ENCODE measurements at regions of chr14 and their contacts with region 1.

Region 1: DNA sequence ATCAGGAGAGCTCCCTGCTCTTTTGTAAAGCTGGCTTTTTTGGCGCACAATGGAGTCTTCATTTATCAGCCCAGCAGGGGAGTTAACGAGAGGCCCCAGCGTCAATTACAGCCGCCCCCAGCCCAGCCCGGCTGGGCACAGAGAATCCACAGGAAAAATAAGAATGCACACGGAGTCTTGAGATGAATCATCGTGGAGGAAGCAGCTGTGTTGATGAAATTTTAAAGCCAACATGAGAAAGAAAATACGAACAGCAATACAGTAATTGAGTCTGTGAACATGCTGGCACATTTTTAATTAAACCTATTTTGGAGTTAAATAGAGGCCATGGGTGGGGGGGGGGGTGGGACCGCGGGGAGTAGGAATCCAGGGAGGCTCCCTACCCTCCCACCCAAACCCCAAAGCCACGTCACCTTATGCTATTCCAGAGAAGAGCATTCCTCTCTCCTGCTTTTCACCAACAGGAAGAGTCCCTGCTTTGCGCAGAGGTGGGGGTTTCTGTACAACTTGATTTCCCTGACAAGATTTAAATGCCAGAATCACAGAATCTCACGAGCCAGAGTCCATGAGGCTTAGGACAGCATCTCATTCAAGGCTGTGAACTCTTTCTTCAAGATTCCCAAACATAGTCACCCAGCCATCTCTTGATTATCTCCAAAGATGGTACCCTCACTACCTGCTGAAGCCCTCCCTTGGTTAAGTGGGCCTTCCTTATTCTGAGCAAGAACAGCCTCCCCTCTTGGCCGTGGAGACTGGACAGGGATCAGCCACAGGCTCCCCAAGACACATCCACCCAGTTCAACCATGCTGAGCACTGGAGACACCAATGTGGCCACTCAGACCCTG is 50.3 kb downstream of the CCNK start:
- DNase-seq: no peak
- H3K4me3 ChIP-seq: no peak overlapping the region
- H3K27ac ChIP-seq: no peak overlapping the region
- H3K4me1 ChIP-seq: no peaks in the 10 kb centered on the region
- H3K27me3 ChIP-seq: no peaks in the 10 kb centered on the region
- CTCF ChIP-seq: no peak
- POLR2A ChIP-seq: no peak

Region 2: GRCh38 chr14:99541677-99542470 is 10.4 kb after region 1 on chr14:
- intact Hi-C with region 1: loop called (anchors 1 kb)
- DNase-seq: no peak
- H3K4me3 ChIP-seq: no peak overlapping the region
- H3K27ac ChIP-seq: no peak overlapping the region
- H3K4me1 ChIP-seq: peaks cover 4 to 11% of the 10 kb centered on the region in 2 donors
- H3K27me3 ChIP-seq: no peaks in the 10 kb centered on the region
- CTCF ChIP-seq: no peak
- POLR2A ChIP-seq: no peak

Region 3: DNA sequence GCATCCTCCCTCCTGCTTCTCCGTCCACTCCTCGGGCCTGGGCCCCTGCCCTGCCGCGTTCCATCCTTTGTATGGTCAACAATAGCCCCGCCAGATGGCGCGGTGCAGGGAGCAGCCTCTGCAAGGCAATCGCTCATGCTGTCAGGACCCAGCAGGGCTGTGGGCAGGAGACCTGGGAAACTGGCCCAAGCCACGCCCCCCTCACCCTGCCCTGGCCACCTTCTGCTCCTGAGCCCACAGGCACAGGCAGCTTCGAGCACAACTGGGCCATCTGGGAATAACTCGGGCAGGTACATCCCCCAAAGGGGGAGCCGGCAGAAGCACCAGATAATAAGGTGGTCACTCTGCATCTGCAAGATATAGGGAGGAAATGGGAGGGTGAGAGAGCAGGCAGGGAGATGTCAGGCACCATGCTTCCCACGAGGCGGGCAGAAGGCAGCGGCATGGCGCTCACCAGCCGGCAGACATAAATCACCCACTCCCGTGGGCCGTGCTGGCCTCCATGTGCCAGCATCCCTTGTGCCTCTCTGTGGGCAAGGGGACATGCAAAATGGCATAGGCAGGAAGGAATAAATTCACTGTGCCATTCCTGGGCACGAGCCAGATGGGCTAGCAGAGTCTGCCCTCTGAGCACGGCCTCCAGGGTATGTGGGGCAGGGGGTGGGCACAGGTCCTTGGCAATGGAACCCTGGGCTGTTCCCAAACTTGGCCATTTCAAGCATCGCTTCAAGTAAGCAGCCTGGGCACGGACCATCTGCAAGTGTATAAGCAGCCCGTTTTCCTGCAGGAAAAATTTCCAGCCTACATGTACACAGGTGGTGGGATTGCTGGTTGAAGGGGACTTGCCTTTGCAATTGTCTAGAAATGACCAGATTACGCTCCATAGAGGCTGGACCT is 32.0 kb after region 1 on chr14:
- intact Hi-C with region 1: loop called (anchors 1 kb)
- DNase-seq: peak; percentile 64 to 83
- H3K4me3 ChIP-seq: no peak overlapping the region
- H3K27ac ChIP-seq: peak overlapping the region; percentile 79 to 80
- H3K4me1 ChIP-seq: peaks cover 21 to 56% of the 10 kb centered on the region in 2 donors
- H3K27me3 ChIP-seq: no peaks in the 10 kb centered on the region
- CTCF ChIP-seq: peak in 2 of 3 donors; percentile 41 to 50
- POLR2A ChIP-seq: no peak